Naive thymus-derived CD8-positive, alpha-beta T cell (primary cell): ENCODE measurements at regions of chr1 and their contacts with region 1.

Region 1: GRCh38 chr1:25642574-25643108 is 26.1 kb downstream of the MAN1C1 start:
- DNase-seq: peak; percentile 42 to 91 (median 78)
- ATAC-seq: peak; percentile 90 to 95
- H3K4me3 Mint-ChIP-seq: peak overlapping the region; percentile 54 to 86 (median 74)
- H3K27ac Mint-ChIP-seq: peak overlapping the region; percentile 72 to 97 (median 92)
- H3K4me1 Mint-ChIP-seq: peaks cover 27 to 88% (median 73%) of the 10 kb centered on the region in 4 donors
- H3K27me3 Mint-ChIP-seq: peaks cover 0 to 5% (median 0%) of the 10 kb centered on the region in 5 donors

Region 2: DNA sequence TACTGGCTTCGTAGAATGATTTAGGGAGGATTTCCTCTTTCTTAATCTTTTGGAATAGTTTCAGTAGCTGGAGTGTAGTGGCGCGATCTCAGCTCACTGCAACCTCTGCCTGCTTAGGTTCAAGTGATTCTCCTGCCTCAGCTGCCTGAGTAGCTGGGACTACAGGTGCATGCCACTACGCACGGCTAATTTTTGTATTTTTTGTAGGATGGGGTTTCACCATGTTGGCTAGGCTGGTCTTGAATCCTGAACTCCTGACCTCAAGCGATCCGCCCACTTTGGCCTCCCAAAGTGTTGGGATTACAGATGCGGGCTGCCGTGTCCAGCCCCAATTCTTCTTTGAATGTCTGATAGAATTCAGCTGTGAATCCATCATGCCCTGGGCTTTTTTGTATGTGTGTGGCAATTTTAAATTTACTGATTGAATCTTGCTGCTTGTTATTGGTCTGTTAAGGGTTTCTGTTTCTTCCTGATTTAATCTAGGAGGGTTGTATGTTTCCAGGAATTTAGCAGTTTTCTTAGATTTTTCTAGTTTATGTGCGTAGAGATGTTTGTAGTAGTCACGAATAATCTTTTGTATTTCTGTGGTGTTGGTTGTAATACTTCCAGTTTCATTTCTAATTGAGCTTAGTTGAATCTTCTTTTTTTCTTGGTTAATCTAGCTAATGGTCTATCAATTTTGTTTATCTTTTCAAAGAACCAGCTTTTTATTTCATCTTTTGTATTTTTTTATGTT is 10.7 kb before region 1 on chr1:
- POLR2A ChIA-PET with region 1: interaction called, 13 read pairs
- DNase-seq: peak in 2 of 10 donors; percentile 13 to 37
- ATAC-seq: peak; percentile 33 to 49
- H3K4me3 Mint-ChIP-seq: peak overlapping the region; percentile 79 to 94 (median 90)
- H3K27ac Mint-ChIP-seq: peak overlapping the region; percentile 93 to 98 (median 96)
- H3K4me1 Mint-ChIP-seq: peaks cover 36 to 80% (median 69%) of the 10 kb centered on the region in 4 donors
- H3K27me3 Mint-ChIP-seq: peaks cover 0 to 9% (median 0%) of the 10 kb centered on the region in 5 donors

Region 3: GRCh38 chr1:25675729-25676476 is 33.3 kb after region 1 on chr1:
- POLR2A ChIA-PET with region 1: interaction called, 23 read pairs
- DNase-seq: peak; percentile 40 to 91 (median 80)
- ATAC-seq: peak; percentile 78 to 90
- H3K4me3 Mint-ChIP-seq: peak overlapping the region; percentile 58 to 91 (median 80)
- H3K27ac Mint-ChIP-seq: peak overlapping the region; percentile 90 to 98 (median 96)
- H3K4me1 Mint-ChIP-seq: peaks cover 59 to 91% (median 89%) of the 10 kb centered on the region in 4 donors
- H3K27me3 Mint-ChIP-seq: no peaks in the 10 kb centered on the region

Region 4: GRCh38 chr1:25771246-25772114 is 128.8 kb after region 1 on chr1:
- POLR2A ChIA-PET with region 1: interaction called, 15 read pairs
- DNase-seq: peak in 9 of 10 donors; percentile 27 to 76 (median 54)
- ATAC-seq: peak; percentile 11 to 12
- H3K4me3 Mint-ChIP-seq: peak overlapping the region; percentile 41 to 88 (median 78)
- H3K27ac Mint-ChIP-seq: peak overlapping the region; percentile 85 to 99 (median 98)
- H3K4me1 Mint-ChIP-seq: peaks cover 59 to 100% (median 83%) of the 10 kb centered on the region in 4 donors
- H3K27me3 Mint-ChIP-seq: peaks cover 0 to 3% (median 0%) of the 10 kb centered on the region in 5 donors